Heart left ventricle (tissue), 16 donors: ENCODE measurements at regions of chr14 and their contacts with region 1.

Region 1: DNA sequence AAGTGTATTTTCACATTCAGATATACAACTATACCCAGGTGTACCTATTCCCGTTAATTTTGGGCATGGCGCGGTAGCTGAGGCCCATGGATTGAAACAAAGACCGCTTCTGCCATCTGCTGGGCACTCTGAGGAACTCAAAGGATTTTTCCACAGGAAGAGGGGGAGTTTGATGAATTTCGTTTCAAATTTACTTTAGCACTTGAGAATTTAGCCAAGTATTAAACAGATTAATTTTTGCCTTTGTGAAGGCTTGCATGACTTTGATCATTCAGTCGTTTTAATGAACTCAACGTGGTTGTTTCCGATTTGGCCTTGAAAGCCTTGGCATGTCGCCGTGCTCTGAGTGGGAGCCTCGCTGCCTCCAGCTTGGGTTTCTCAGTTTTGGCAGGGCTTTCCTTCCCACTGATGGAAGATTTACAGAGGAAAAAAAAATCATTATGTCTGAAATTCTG is 153.2 kb upstream of the DDHD1 start:
- DNase-seq: peak; percentile 52 to 73 (median 64)
- ATAC-seq: peak; percentile 51 to 85 (median 76)
- H3K4me3 ChIP-seq: peak overlapping the region in 10 of 12 donors; percentile 26 to 57 (median 42)
- H3K27ac ChIP-seq: peak overlapping the region in 10 of 12 donors; percentile 8 to 68 (median 44)
- H3K4me1 ChIP-seq: peaks cover 0 to 21% (median 4%) of the 10 kb centered on the region in 12 donors
- H3K27me3 ChIP-seq: no peaks in the 10 kb centered on the region
- CTCF ChIP-seq: peak; percentile 70 to 89 (median 78)
- POLR2A ChIP-seq: no peak

Region 2: GRCh38 chr14:52776816-52777215 is 529.5 kb before region 1 on chr14:
- intact Hi-C with region 1: no loop called
- DNase-seq: no peak
- ATAC-seq: no peak
- H3K4me3 ChIP-seq: no peak overlapping the region
- H3K27ac ChIP-seq: no peak overlapping the region
- H3K4me1 ChIP-seq: no peaks in the 10 kb centered on the region
- H3K27me3 ChIP-seq: no peaks in the 10 kb centered on the region
- CTCF ChIP-seq: no peak
- POLR2A ChIP-seq: no peak

Region 3: GRCh38 chr14:52824507-52824906 is 481.8 kb before region 1 on chr14:
- intact Hi-C with region 1: loop called in 7 of 10 experiments (anchors 1 to 10 kb)
- DNase-seq: no peak
- ATAC-seq: no peak
- H3K4me3 ChIP-seq: no peak overlapping the region
- H3K27ac ChIP-seq: no peak overlapping the region
- H3K4me1 ChIP-seq: peaks cover 0 to 18% (median 0%) of the 10 kb centered on the region in 12 donors
- H3K27me3 ChIP-seq: no peaks in the 10 kb centered on the region
- CTCF ChIP-seq: no peak
- POLR2A ChIP-seq: no peak

Region 4: GRCh38 chr14:53055003-53055402 is 251.3 kb before region 1 on chr14:
- intact Hi-C with region 1: loop called in 1 of 10 experiments (anchors 10 kb)
- DNase-seq: no peak
- ATAC-seq: peak; percentile 51 to 81 (median 65)
- H3K4me3 ChIP-seq: no peak overlapping the region
- H3K27ac ChIP-seq: peak overlapping the region in 2 of 12 donors; percentile 8 to 9
- H3K4me1 ChIP-seq: peaks cover 0 to 7% (median 0%) of the 10 kb centered on the region in 12 donors
- H3K27me3 ChIP-seq: no peaks in the 10 kb centered on the region
- CTCF ChIP-seq: peak; percentile 63 to 88 (median 80)
- POLR2A ChIP-seq: no peak

Region 5: DNA sequence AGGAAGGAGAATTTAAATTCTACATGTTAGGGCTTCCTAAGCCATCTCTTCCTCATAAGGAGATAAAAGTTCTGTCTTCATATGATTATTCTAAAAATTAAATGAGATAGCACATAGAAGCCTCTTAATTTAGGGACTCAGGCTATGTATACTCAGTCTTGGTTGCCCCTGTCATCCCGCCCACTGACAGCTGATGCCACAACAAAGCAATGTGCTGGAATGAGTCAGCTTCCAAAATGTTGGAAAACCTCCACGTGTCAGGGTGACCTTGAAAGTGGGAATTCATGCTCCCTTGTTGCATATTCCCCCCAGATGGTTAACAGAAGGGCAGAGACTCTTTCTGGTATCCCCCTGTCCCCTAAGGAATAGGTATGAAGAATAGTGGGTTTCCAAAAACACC is 84.9 kb after region 1 on chr14:
- intact Hi-C with region 1: no loop called
- DNase-seq: peak in 1 of 5 donors; percentile 29
- ATAC-seq: no peak
- H3K4me3 ChIP-seq: no peak overlapping the region
- H3K27ac ChIP-seq: no peak overlapping the region
- H3K4me1 ChIP-seq: no peaks in the 10 kb centered on the region
- H3K27me3 ChIP-seq: no peaks in the 10 kb centered on the region
- CTCF ChIP-seq: no peak
- POLR2A ChIP-seq: no peak